Ovary (tissue), 10 donors: ENCODE measurements at regions of chr19 and their contacts with region 1.

Region 1: GRCh38 chr19:46878613-46879375 is 18.0 kb downstream of the ARHGAP35 start:
- DNase-seq: no peak
- H3K4me3 ChIP-seq: no peak overlapping the region
- H3K27ac ChIP-seq: no peak overlapping the region
- H3K4me1 ChIP-seq: no peaks in the 10 kb centered on the region
- H3K27me3 ChIP-seq: no peaks in the 10 kb centered on the region
- CTCF ChIP-seq: no peak
- EP300 ChIP-seq: no peak
- POLR2A ChIP-seq: no peak

Region 2: DNA sequence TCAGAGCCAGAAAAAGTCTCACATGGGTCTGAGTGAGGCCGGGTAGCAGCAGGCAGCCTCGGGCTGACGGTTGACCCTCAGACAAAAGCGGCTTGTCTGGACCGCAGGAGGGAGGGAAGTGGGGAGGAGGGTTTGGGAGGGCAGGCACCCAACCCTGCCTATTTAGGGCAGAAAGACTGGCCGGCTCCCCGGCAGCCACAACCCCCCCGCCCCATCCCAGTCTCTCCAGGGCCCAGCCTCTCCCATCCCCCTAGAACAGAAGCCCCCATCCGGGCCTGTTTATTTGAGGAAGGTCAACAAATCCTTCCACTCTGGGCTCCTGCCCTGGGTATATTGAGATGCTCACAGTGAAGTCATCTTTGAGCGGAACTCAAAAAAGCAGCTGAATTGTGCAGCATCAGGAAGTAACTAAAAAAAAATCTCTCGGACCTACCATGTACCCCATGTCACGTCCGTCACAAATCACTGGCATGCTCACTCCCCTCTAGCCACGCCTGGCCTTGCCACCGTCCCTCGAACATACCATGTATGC is 224.1 kb before region 1 on chr19:
- intact Hi-C with region 1: no loop called
- DNase-seq: no peak
- H3K4me3 ChIP-seq: no peak overlapping the region
- H3K27ac ChIP-seq: peak overlapping the region in 1 of 2 donors; percentile 12
- H3K4me1 ChIP-seq: no peaks in the 10 kb centered on the region
- H3K27me3 ChIP-seq: no peaks in the 10 kb centered on the region
- CTCF ChIP-seq: no peak
- EP300 ChIP-seq: no peak
- POLR2A ChIP-seq: no peak

Region 3: GRCh38 chr19:46913852-46914430 is 35.1 kb after region 1 on chr19:
- intact Hi-C with region 1: no loop called
- DNase-seq: no peak
- H3K4me3 ChIP-seq: no peak overlapping the region
- H3K27ac ChIP-seq: peak overlapping the region in 1 of 2 donors; percentile 24
- H3K4me1 ChIP-seq: peaks cover 6% of the 10 kb centered on the region
- H3K27me3 ChIP-seq: no peaks in the 10 kb centered on the region
- CTCF ChIP-seq: no peak
- EP300 ChIP-seq: no peak
- POLR2A ChIP-seq: no peak

Region 4: GRCh38 chr19:46924874-46925547 is 46.2 kb after region 1 on chr19:
- intact Hi-C with region 1: loop called in 1 of 4 experiments (anchors 10 kb)
- DNase-seq: no peak
- H3K4me3 ChIP-seq: no peak overlapping the region
- H3K27ac ChIP-seq: no peak overlapping the region
- H3K4me1 ChIP-seq: peaks cover 9% of the 10 kb centered on the region
- H3K27me3 ChIP-seq: no peaks in the 10 kb centered on the region
- CTCF ChIP-seq: no peak
- EP300 ChIP-seq: no peak
- POLR2A ChIP-seq: no peak